ENCODE measurements at regions of chr9 and their contacts with region 1.

Region 1: DNA sequence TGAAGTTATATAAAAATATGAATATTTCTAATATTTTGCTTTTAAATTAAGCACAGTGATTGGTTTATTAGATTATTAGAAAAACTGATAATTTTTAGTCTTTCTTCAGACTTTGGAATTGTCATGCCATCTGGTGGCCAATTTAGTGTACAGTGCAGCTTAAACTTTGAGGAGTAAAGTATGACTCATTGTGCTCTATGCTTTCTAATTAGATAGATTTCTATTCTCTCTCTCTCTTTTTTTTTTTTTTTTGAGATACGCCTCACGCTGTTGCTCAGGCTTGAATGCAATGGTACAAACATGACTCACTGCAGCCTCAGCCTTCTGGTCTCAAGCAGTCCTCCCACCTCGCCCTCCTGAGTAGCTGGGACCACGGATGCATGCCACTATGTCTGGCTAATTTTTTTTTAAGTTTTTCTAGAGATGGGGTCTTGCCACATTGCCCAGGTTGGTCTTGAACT is 42.1 kb upstream of the GPR21 start:
- DNase-seq: no peak
- H3K4me3 Mint-ChIP-seq: no peak overlapping the region
- H3K27ac Mint-ChIP-seq: no peak overlapping the region
- H3K4me1 Mint-ChIP-seq: peaks cover 5% of the 10 kb centered on the region
- H3K27me3 Mint-ChIP-seq: no peaks in the 10 kb centered on the region

Region 2: GRCh38 chr9:122464633-122465567 is 526.5 kb before region 1 on chr9:
- intact Hi-C with region 1: loop called (anchors 2 kb)
- DNase-seq: peak; percentile 59
- H3K4me3 Mint-ChIP-seq: peak overlapping the region; percentile 81
- H3K27ac Mint-ChIP-seq: peak overlapping the region; percentile 80
- H3K4me1 Mint-ChIP-seq: peaks cover 17% of the 10 kb centered on the region
- H3K27me3 Mint-ChIP-seq: peaks cover 26% of the 10 kb centered on the region

Region 3: DNA sequence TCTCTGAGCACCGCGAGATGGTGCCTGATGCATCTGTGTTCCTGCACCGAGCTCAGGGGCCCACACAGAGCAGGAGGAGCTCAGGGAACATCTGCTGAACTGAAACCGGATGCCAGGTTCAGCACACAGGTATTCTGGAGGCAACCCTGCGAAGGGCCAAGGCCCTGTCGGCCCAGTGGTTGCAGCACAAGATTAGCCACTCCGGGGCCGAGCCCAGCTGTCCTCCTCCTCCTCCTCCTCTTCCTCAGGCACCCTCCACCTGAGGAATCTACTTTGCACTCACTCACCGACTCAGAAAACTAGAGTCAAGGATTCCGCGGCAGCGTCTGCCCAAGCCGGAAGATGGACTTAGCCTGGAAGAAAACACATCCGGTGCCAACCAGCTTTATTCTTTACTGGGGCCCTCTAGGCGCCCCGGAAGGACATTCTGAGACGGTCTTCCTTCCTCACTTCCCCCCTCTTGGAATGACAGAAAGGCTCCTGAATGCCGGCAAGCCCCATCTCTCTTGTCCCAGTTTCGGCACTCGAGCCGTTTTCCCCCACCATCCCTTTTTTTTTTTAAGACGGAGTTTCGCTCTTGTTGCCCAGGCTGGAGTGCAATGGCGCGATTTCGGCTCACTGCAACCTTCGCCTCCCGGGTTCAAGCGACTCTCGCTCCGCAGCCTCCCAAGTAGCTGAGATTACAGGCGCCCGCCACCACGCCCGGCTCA is 78.3 kb before region 1 on chr9 and contains the start of gene ZBTB6:
- intact Hi-C with region 1: loop called (anchors 1 kb)
- DNase-seq: peak; percentile 61
- H3K4me3 Mint-ChIP-seq: peak within 1 kb of the TSS; percentile 98
- H3K27ac Mint-ChIP-seq: peak within 1 kb of the TSS; percentile 94
- H3K4me1 Mint-ChIP-seq: peaks cover 34% of the 10 kb centered on the region
- H3K27me3 Mint-ChIP-seq: no peaks in the 10 kb centered on the region
- total RNA-seq, gene ZBTB6: 12.1 and 12.6 TPM in 2 replicates

Region 4: GRCh38 chr9:122940603-122941559 is 50.5 kb before region 1 on chr9 and contains the start of gene RABGAP1:
- intact Hi-C with region 1: loop called (anchors 1 kb)
- DNase-seq: peak; percentile 97
- H3K4me3 Mint-ChIP-seq: peak within 1 kb of the TSS; percentile 98
- H3K27ac Mint-ChIP-seq: peak within 1 kb of the TSS; percentile 76
- H3K4me1 Mint-ChIP-seq: peaks cover 27% of the 10 kb centered on the region
- H3K27me3 Mint-ChIP-seq: peaks cover 1% of the 10 kb centered on the region
- total RNA-seq, gene RABGAP1: 26.6 and 30.2 TPM in 2 replicates

Region 5: DNA sequence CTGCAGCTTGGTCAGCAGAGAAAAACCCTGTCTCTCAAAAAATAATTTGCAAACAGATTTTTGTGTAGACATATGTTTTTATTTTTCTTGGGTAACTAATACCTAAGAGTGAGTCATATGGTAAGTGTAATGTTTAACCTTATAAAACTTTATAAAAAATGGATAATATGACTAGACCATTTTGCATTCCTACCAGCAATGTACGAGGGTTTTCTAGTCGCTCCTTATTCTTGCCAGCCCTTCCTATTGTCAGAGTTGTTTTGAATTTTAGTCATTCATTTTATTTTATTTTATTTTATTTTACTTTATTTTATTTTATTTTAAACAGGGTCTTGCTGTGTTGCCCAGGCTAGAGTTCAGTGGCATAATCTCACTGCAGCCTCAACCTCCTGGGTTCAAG is 12.8 kb before region 1 on chr9:
- intact Hi-C with region 1: no loop called
- DNase-seq: no peak
- H3K4me3 Mint-ChIP-seq: no peak overlapping the region
- H3K27ac Mint-ChIP-seq: no peak overlapping the region
- H3K4me1 Mint-ChIP-seq: no peaks in the 10 kb centered on the region
- H3K27me3 Mint-ChIP-seq: no peaks in the 10 kb centered on the region

Region 6: GRCh38 chr9:123349691-123350480 is 358.5 kb after region 1 on chr9:
- intact Hi-C with region 1: loop called (anchors 5 kb)
- DNase-seq: peak; percentile 55
- H3K4me3 Mint-ChIP-seq: no peak overlapping the region
- H3K27ac Mint-ChIP-seq: no peak overlapping the region
- H3K4me1 Mint-ChIP-seq: no peaks in the 10 kb centered on the region
- H3K27me3 Mint-ChIP-seq: peaks cover 12% of the 10 kb centered on the region

Measured in activated T-helper 1 cell treated with anti-CD3 and anti-CD28 coated beads, Interleukin-12 subunit alpha, Interleukin-12 subunit beta, Interleukin-2, Interleukin-4 antibody, amounts not matched to agents 30 ng/mL and 10 ng/mL and 1 ng/mL, durations not matched to agents 14 hours and 24 hours and 36 hours (primary cell).